Activated CD4-positive, alpha-beta memory T cell treated with anti-CD3 and anti-CD28 coated beads, Interleukin-2, amount 10 ng/mL, durations not matched to agents 7 days and 5 days (primary cell): ENCODE measurements at regions of chr4 and their contacts with region 1.

Region 1: DNA sequence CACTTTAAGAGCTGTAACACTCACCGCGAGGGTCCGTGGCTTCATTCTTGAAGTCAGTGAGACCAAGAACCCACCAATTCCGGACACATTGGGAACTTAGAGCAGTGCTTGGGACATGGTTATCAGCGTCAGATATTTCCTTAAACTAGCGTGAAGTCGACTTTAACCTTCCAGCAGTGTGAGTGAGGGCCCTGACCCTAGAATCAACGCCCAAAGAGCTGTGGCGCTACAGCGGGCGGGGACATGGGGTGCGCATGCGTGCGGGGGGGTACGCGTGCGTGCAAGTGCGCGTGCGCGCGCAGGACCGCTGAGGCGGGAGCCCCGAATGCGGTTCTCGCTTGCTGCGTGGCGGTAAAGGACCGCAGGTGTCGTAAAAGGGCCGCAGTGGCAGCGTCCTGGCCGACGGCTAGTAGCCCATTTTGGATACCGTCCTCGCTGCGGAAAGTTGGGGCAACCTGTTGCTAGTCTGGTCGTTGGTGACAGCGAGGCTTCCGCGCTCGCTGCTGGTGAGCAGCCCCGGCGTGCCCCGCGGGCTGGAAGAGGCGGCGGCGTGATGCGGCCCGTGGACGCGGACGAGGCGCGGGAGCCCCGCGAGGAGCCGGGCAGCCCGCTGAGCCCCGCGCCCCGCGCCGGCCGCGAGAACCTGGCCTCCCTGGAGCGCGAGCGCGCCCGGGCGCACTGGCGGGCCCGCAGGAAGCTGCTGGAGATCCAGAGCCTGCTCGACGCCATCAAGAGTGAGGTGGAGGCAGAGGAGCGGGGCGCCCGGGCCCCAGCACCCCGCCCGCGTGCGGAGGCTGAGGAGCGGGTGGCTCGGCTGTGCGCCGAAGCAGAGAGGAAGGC is 19.8 kb upstream of the S100P start:
- DNase-seq: peak; percentile 95
- H3K4me3 Mint-ChIP-seq: peak overlapping the region; percentile 97
- H3K27ac Mint-ChIP-seq: peak overlapping the region; percentile 96
- H3K4me1 Mint-ChIP-seq: peaks cover 48% of the 10 kb centered on the region
- H3K27me3 Mint-ChIP-seq: no peaks in the 10 kb centered on the region

Region 2: DNA sequence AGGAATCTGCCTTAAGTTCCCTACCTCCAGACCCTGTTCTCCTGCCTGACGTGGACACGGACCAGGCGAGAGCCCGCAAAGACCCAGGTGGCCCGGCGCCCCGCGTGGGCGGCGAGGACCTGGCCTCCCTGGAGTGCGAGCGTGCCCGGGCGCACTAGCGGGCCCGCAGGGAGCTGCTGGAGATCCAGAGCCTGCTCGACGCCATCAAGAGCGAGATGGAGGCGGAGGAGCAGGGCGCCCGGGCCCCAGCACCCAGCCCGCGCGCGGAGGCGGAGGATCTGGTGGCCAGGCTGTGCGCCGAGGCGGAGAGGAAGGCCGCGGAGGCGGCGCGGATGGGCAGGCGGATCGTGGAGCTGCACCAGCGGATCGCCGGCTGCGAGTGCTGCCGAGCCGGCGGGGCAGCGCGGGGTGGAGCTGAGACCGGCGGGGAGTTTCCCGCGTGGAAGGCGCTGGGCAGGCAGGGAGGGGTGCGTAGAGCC is 15.2 kb before region 1 on chr4:
- CTCF ChIA-PET with region 1: interaction called, 8 read pairs
- POLR2A ChIA-PET with region 1: interaction called, 20 read pairs
- DNase-seq: peak; percentile 43
- H3K4me3 Mint-ChIP-seq: peak overlapping the region; percentile 60
- H3K27ac Mint-ChIP-seq: no peak overlapping the region
- H3K4me1 Mint-ChIP-seq: peaks cover 8% of the 10 kb centered on the region
- H3K27me3 Mint-ChIP-seq: peaks cover 41% of the 10 kb centered on the region

Region 3: DNA sequence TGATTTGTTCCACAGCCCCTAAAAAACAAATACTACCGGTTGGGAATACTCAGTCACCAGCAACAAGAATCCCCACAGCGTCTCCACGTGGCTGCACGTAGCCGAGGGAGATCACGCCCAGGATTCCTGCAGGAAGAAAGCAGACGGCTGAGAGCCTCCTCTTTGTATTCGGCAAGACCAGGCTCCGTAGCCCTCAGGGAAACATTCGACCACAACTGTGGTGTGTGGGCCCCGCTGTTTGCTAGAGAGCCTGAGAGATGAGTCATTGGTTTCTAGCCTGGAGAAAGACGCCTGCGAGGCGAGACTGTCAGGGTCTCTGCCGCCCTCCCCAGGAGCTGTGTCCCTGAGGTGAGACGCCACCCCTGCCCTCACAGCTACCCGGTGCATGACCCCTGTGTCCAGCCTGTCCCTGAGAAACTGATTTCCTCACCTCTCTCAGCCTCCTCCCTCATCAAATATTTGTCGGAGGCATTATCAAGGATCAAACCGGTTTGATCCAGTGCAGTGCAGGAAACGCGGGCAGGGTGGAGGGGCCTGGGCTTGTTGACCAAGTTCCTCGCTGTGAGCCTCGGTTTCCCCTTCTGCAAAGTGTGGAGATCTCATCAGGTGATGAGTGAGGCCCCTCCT is 15.1 kb after region 1 on chr4:
- CTCF ChIA-PET with region 1: interaction called, 180 read pairs
- POLR2A ChIA-PET with region 1: interaction called, 374 read pairs
- DNase-seq: peak; percentile 91
- H3K4me3 Mint-ChIP-seq: peak overlapping the region; percentile 81
- H3K27ac Mint-ChIP-seq: peak overlapping the region; percentile 97
- H3K4me1 Mint-ChIP-seq: peaks cover 87% of the 10 kb centered on the region
- H3K27me3 Mint-ChIP-seq: no peaks in the 10 kb centered on the region

Region 4: GRCh38 chr4:6709230-6710114 is 35.6 kb after region 1 on chr4 and contains the start of gene MRFAP1L1:
- CTCF ChIA-PET with region 1: interaction called, 62 read pairs
- POLR2A ChIA-PET with region 1: interaction called, 223 read pairs
- DNase-seq: peak; percentile 98
- H3K4me3 Mint-ChIP-seq: peak within 1 kb of the TSS; percentile 99
- H3K27ac Mint-ChIP-seq: peak within 1 kb of the TSS; percentile 97
- H3K4me1 Mint-ChIP-seq: peaks cover 49% of the 10 kb centered on the region
- H3K27me3 Mint-ChIP-seq: no peaks in the 10 kb centered on the region
- total RNA-seq, gene MRFAP1L1: 81.9 to 83.1 TPM

Region 5: DNA sequence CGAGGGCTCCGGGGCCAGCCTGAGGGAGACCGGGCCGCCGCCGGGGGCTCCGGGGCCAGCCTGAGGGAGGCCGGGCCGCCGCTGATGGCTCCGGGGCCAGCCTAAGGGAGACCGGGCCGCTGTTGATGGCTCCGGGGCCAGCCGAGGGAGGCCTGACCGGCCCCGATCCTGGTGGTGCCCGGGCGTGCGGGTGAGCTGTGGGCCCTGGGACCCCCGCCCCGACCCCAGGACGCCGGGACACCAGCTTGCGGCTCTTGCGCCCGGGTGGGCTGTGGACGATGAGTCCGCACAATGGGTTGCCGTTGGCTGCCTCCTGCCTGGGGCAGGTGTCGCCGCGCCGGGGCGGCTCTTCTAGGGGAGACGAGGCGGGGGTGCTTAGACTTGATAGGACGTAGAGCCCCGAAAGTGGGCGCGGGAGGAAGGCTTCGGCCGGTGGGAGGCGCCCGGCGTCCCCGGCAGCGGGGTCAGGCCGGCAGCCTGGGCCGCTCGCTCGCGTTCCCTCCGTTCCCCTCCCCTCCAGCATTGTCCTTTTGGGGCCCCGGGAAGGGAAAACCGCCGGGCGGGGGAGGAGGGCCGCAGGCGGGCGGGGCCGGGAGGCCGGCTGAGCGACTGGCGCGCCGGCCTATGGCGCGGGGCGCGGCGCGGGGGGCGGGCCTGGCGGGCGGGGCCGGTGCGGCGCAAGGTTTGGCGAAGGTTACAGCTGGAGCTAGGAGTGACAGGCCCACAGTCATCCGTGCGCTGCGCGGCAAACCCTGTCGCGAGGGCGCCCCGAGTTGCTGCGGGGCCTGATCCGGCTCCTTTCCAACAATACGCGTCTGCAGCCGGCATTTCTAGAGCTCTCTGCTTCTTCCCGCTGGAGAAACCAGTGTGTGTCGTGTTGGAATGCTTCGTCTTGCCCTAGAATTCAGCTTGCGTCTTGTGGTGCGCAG is 109.4 kb after region 1 on chr4:
- CTCF ChIA-PET with region 1: interaction called, 3 read pairs
- POLR2A ChIA-PET with region 1: interaction called, 12 read pairs
- DNase-seq: peak; percentile 92
- H3K4me3 Mint-ChIP-seq: peak overlapping the region; percentile 79
- H3K27ac Mint-ChIP-seq: peak overlapping the region; percentile 79
- H3K4me1 Mint-ChIP-seq: peaks cover 60% of the 10 kb centered on the region
- H3K27me3 Mint-ChIP-seq: peaks cover 2% of the 10 kb centered on the region